ENCODE measurements at regions of chr3 and their contacts with region 1.

Region 1: DNA sequence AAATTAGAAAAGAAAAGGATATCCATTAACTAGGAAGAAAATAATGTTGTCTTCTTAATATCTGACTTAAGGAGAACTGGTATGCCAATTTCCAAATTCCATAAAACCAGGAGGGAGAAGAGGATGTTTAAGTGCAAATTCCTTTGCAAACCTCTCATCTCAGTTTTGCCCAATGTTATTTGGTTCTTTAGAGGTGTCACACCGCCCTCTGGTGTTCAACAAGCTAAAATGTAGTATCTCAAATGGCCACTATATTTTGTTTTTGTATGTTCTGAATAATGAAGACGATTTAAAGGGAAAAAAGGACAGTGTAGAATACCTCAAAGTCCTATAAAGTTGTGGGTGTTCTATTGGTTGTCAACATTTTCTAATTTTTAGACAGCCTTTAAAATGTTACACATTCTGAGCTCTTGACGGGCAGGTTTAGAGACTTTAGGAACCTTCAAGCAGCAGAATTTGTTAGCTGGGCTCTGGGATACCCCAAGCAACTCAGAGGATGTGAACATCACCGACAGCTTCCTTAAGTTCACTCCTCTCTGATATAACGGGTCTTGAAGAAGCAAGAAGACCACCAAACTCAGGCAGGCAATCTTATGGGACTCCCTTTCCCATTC is 458.3 kb downstream of the MFSD1 start:
- DNase-seq: peak; percentile 19 to 65
- ATAC-seq: peak; percentile 57 to 82; a peak in 4 of 6 replicates
- H3K4me3 ChIP-seq: no peak overlapping the region
- H3K27ac ChIP-seq: no peak overlapping the region
- H3K4me1 ChIP-seq: no peaks in the 10 kb centered on the region
- CTCF ChIP-seq: peak; percentile 86
- EP300 ChIP-seq: no peak
- POLR2A ChIP-seq: no peak
- RAD21 ChIP-seq: peak; percentile 90 to 92

Region 2: DNA sequence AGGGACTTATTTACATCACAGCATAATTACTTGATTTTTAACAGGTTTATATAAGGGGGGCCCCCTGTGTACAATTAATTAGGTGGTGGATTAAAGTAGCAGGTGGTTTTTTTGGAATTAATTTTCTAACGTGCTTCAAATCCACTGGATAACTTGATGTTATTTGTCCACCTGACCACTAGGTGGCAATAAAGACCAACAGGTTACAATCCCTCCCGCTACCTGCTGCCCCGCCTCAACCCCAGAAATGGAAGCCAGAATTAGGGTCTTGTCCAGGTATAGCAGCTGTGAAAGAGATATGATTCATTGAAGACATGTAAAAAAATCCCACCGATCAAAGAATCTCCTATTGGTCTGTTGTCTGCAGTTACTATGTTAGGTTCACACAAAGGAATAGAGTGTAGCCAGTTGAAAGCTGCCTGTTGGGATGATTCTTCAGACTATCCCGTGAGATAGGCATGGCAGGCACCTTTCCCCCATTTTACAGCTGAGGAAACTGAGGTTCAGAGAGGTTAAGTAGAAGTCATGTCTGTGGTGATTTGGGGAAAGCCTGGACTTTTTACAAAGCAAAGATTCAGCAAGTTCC is 414.3 kb before region 1 on chr3:
- CTCF ChIA-PET with region 1: interaction called, 305 read pairs
- POLR2A ChIA-PET with region 1: no interaction called
- DNase-seq: peak; percentile 49 to 50
- ATAC-seq: peak in 1 of 2 experiments; percentile 74; a peak in 3 of 6 replicates
- H3K4me3 ChIP-seq: no peak overlapping the region
- H3K27ac ChIP-seq: no peak overlapping the region
- H3K4me1 ChIP-seq: no peaks in the 10 kb centered on the region
- CTCF ChIP-seq: peak; percentile 86
- EP300 ChIP-seq: no peak
- POLR2A ChIP-seq: no peak
- RAD21 ChIP-seq: peak; percentile 89 to 91

Region 3: GRCh38 chr3:158863247-158863646 is 396.9 kb before region 1 on chr3:
- CTCF ChIA-PET with region 1: interaction called, 14 read pairs
- POLR2A ChIA-PET with region 1: no interaction called
- DNase-seq: no peak
- ATAC-seq: no peak
- H3K4me3 ChIP-seq: no peak overlapping the region
- H3K27ac ChIP-seq: no peak overlapping the region
- H3K4me1 ChIP-seq: no peaks in the 10 kb centered on the region
- CTCF ChIP-seq: no peak
- EP300 ChIP-seq: no peak
- POLR2A ChIP-seq: no peak
- RAD21 ChIP-seq: no peak

Region 4: GRCh38 chr3:158912188-158912587 is 348.0 kb before region 1 on chr3:
- CTCF ChIA-PET with region 1: interaction called, 17 read pairs
- POLR2A ChIA-PET with region 1: no interaction called
- DNase-seq: peak in 1 of 2 experiments; percentile 4
- ATAC-seq: no peak
- H3K4me3 ChIP-seq: no peak overlapping the region
- H3K27ac ChIP-seq: no peak overlapping the region
- H3K4me1 ChIP-seq: no peaks in the 10 kb centered on the region
- CTCF ChIP-seq: no peak; the same call in 2 of the 3 replicates
- EP300 ChIP-seq: no peak
- POLR2A ChIP-seq: no peak
- RAD21 ChIP-seq: no peak

Region 5: DNA sequence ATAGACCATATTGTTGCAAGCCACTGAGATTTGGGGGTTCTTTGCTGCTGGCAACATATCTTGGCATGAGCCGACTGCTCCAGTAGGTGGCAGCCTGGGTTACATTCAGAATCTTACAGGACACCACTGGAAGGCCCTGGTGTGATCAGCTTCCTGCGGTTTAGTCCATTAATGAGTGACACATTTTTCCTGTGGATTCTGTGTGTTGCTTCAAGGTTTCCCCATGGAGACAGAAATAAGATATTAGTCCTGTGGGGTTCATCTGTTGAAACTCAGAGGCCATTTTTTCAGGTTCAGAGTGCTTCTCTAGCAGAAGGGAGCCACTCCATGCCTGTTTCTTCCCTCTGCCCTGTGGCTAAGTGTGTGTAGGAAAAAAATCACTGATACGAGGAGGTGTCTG is 342.1 kb before region 1 on chr3:
- CTCF ChIA-PET with region 1: interaction called, 17 read pairs
- POLR2A ChIA-PET with region 1: interaction called, 3 read pairs
- DNase-seq: peak; percentile 15 to 53
- ATAC-seq: peak; percentile 86 to 95
- H3K4me3 ChIP-seq: no peak overlapping the region
- H3K27ac ChIP-seq: no peak overlapping the region
- H3K4me1 ChIP-seq: no peaks in the 10 kb centered on the region
- CTCF ChIP-seq: peak; percentile 53
- EP300 ChIP-seq: no peak
- POLR2A ChIP-seq: no peak
- RAD21 ChIP-seq: peak; percentile 65 to 71

Region 6: GRCh38 chr3:158925021-158925420 is 335.1 kb before region 1 on chr3:
- CTCF ChIA-PET with region 1: interaction called, 10 read pairs
- POLR2A ChIA-PET with region 1: no interaction called
- DNase-seq: no peak
- ATAC-seq: no peak
- H3K4me3 ChIP-seq: no peak overlapping the region
- H3K27ac ChIP-seq: no peak overlapping the region
- H3K4me1 ChIP-seq: no peaks in the 10 kb centered on the region
- CTCF ChIP-seq: no peak
- EP300 ChIP-seq: no peak
- POLR2A ChIP-seq: no peak
- RAD21 ChIP-seq: no peak

Region 7: DNA sequence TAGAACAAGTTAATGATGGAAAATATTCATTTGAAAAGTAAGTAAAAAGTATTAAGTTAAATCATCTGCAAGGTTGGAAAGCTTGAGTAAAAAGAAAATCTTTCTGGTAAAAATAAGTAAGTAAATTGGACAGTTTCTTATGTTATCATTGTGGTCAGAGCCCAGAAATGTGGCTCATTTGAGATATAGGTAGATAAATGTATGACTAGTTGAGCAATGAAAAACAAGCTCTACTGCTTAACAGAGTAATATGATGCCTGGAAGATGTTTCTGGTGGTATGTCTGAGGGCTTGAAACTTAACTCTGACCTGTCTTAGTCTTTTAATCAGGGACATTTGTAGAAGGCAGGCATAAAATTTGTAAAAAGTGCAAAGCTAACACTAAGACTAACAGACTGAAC is 14.3 kb before region 1 on chr3:
- CTCF ChIA-PET with region 1: interaction called, 11 read pairs
- POLR2A ChIA-PET with region 1: no interaction called
- DNase-seq: no peak
- ATAC-seq: no peak
- H3K4me3 ChIP-seq: no peak overlapping the region
- H3K27ac ChIP-seq: no peak overlapping the region
- H3K4me1 ChIP-seq: no peaks in the 10 kb centered on the region
- CTCF ChIP-seq: no peak
- EP300 ChIP-seq: no peak
- POLR2A ChIP-seq: no peak
- RAD21 ChIP-seq: no peak